ENCODE measurements at regions of chr2 and their contacts with region 1.

Region 1: DNA sequence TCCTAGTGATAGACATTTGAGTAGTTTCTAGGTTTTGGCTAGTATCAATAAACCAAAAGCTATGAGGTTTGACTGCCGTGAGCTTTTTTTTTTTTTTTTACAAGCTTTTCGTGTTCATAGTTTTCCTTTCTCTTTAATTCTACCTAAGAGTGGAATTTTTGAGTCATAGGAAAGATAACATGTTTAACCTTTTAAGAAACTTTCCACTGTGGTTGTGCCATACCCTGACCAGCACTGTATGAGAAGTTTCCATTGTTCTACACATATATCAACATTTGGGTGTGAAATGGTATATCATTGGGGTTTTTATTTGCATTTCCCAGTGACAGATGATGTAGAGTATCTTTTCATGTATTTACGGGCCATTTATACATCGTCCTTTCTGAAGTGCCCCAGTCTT is 31.7 kb downstream of the UBE2F start:
- DNase-seq: peak; percentile 80
- ATAC-seq: peak; percentile 80
- H3K4me3 Mint-ChIP-seq: peak overlapping the region; percentile 49
- H3K27ac Mint-ChIP-seq: peak overlapping the region; percentile 98
- H3K4me1 Mint-ChIP-seq: peaks cover 74% of the 10 kb centered on the region
- H3K27me3 Mint-ChIP-seq: no peaks in the 10 kb centered on the region
- CTCF ChIP-seq: no peak

Region 2: DNA sequence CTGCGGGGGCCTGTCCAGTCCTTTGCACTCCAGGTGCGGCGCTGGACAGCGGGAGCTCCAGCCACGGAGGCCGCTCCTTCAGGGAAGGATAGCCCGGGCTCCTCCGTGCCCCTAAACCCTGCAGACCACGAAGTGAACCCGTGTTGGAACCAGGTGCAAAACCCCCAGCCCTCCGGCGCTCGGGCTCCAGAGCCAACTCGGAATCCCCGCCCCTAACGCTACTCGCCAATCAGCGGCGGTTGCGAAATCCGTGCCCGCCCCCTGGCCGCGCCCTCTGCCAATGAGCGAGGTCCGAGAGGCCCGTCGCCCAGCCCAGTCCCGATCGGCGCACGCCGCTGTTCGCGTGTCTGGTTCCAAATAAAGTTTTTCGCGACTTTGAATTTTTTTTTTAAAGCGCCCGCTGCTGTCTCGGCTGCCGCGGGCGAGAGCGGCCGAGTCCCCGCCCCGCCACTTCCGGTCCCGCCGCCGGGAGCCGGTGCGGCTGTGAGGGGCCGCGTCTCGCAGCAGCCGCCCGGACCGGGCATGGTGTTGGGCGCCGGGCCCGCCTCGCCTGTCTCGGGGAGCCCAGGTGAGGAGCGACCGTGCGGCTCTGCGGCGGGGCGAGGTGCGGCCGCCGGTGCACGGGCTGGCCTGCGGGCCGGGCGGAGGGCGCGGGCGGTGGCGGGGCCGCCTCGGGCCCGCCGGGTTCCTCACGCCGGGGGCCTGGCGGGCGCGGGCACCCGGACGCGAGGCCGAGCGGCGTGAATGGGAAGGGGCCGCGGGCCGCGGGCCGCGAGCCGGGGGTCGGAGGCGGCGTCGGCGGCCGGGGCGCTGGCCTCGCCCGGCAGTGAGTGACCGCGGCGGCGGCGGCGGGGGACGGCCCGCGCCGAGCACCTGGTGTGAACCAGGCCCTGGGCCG is 31.7 kb before region 1 on chr2 and contains the start of gene UBE2F:
- CTCF ChIA-PET with region 1: interaction called, 3 read pairs
- POLR2A ChIA-PET with region 1: interaction called, 6 read pairs
- intact Hi-C with region 1: loop called (anchors 5 kb)
- DNase-seq: peak; percentile 97
- ATAC-seq: peak; percentile 95
- H3K4me3 Mint-ChIP-seq: peak within 1 kb of the TSS; percentile 80
- H3K27ac Mint-ChIP-seq: peak within 1 kb of the TSS; percentile 73
- H3K4me1 Mint-ChIP-seq: peaks cover 39% of the 10 kb centered on the region
- H3K27me3 Mint-ChIP-seq: no peaks in the 10 kb centered on the region
- CTCF ChIP-seq: no peak
- total RNA-seq, gene UBE2F: 96.5 to 99.5 TPM

Region 3: GRCh38 chr2:237978058-237978712 is 20.3 kb before region 1 on chr2:
- CTCF ChIA-PET with region 1: interaction called, 5 read pairs
- POLR2A ChIA-PET with region 1: interaction called, 20 read pairs
- intact Hi-C with region 1: no loop called
- DNase-seq: no peak
- ATAC-seq: peak; percentile 11
- H3K4me3 Mint-ChIP-seq: no peak overlapping the region
- H3K27ac Mint-ChIP-seq: peak overlapping the region; percentile 95
- H3K4me1 Mint-ChIP-seq: peaks cover 63% of the 10 kb centered on the region
- H3K27me3 Mint-ChIP-seq: no peaks in the 10 kb centered on the region
- CTCF ChIP-seq: no peak

Region 4: DNA sequence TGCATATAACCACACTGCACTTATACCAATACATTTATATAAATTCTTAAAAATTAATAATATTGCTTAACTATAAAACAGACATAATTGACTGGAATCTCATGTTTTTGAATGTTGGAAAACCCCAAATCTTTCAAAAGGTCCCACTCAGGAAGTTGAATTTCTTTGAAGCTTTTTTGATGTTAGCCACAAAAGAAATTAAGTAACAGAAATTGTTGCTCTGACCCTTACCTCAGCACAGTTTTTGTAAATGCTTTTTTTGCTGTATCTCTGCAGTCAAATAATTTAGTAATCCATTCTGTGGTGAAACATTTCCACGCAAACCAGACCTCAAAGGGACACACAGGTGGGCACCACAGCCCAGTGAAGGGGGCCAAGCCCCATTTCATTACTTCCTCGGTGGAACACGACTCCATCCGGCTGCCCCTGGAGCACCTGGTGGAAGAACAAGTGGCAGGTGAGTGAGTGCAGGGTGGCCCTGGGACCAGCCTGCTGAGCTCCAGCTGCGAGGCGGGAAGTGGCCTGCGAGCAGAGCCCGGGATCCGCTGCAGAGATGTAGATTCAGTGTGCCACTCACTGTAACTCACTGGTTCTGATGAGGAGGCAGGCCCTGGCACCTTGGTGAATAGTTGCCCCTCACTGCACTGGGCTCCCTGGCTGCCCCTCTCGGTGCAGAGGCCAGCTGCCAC is 70.6 kb after region 1 on chr2:
- CTCF ChIA-PET with region 1: no interaction called
- POLR2A ChIA-PET with region 1: interaction called, 5 read pairs
- intact Hi-C with region 1: loop called (anchors 2 kb)
- DNase-seq: peak; percentile 22
- ATAC-seq: peak; percentile 10
- H3K4me3 Mint-ChIP-seq: no peak overlapping the region
- H3K27ac Mint-ChIP-seq: peak overlapping the region; percentile 85
- H3K4me1 Mint-ChIP-seq: peaks cover 63% of the 10 kb centered on the region
- H3K27me3 Mint-ChIP-seq: no peaks in the 10 kb centered on the region
- CTCF ChIP-seq: no peak